Activated CD4-positive, alpha-beta memory T cell treated with anti-CD3 and anti-CD28 coated beads, Interleukin-2, amount 10 ng/mL, durations not matched to agents 7 days and 5 days (primary cell): ENCODE measurements at regions of chr9 and their contacts with region 1.

Region 1: DNA sequence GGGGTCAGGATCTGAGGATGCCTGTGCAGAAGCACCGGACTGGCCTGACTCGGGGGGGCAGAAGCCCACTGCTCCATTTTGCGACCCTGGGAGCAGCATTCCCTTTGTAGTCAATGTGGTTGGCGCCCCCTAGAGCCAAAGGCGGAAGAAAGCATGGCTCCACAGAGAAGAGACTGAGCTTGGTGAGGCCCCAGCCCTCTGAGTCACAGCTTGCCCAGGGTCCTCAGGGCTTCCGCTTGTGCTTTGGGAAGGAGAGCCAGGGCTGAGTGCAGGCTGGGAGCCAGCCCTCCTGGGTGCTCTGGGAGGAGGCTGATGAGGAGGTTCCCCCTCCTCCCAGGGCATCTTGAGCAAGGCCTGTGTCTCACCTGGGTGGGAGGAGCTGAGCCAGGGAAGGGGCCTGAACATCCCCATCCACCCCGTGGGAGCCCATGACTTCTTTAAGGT is 5.5 kb upstream of the AQP3 start:
- DNase-seq: peak; percentile 64
- H3K4me3 Mint-ChIP-seq: peak overlapping the region; percentile 2
- H3K27ac Mint-ChIP-seq: peak overlapping the region; percentile 82
- H3K4me1 Mint-ChIP-seq: peaks cover 63% of the 10 kb centered on the region
- H3K27me3 Mint-ChIP-seq: no peaks in the 10 kb centered on the region

Region 2: DNA sequence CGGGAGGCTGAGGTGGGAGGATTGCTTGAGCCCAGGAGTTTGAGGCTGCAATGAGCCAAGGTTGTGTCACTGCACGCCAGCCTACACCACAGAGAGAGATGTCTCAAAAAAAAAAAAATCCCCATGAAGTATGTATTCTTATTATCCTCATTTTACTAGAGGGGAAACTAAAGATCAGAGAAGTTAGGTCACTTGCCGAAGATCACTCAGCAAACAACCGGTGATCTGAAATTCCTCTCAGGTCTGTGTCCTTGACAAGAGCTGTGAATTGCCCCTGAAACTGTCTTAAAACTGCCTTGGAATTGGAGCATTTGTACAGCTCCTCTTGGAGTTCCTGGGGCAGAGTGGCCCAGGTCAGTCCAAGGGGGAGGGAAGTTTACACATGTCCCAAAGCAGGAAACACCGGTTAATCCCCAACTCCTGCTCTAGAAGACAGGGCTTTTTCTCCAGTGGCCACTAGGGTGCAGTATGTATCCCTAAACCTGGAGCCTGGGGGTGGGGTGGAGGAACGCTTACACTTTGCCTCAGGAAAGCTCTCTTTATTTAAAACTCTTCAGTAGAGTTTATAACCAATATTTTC is 78.1 kb before region 1 on chr9:
- CTCF ChIA-PET with region 1: interaction called, 35 read pairs
- POLR2A ChIA-PET with region 1: interaction called, 8 read pairs
- DNase-seq: peak; percentile 70
- H3K4me3 Mint-ChIP-seq: no peak overlapping the region
- H3K27ac Mint-ChIP-seq: peak overlapping the region; percentile 33
- H3K4me1 Mint-ChIP-seq: peaks cover 14% of the 10 kb centered on the region
- H3K27me3 Mint-ChIP-seq: no peaks in the 10 kb centered on the region

Region 3: GRCh38 chr9:33404788-33405362 is 48.0 kb before region 1 on chr9:
- CTCF ChIA-PET with region 1: interaction called, 278 read pairs
- POLR2A ChIA-PET with region 1: interaction called, 3 read pairs
- DNase-seq: no peak
- H3K4me3 Mint-ChIP-seq: no peak overlapping the region
- H3K27ac Mint-ChIP-seq: no peak overlapping the region
- H3K4me1 Mint-ChIP-seq: peaks cover 10% of the 10 kb centered on the region
- H3K27me3 Mint-ChIP-seq: no peaks in the 10 kb centered on the region

Region 4: GRCh38 chr9:33436440-33436839 is 16.4 kb before region 1 on chr9:
- CTCF ChIA-PET with region 1: interaction called, 26 read pairs
- POLR2A ChIA-PET with region 1: interaction called, 11 read pairs
- DNase-seq: no peak
- H3K4me3 Mint-ChIP-seq: no peak overlapping the region
- H3K27ac Mint-ChIP-seq: no peak overlapping the region
- H3K4me1 Mint-ChIP-seq: peaks cover 55% of the 10 kb centered on the region
- H3K27me3 Mint-ChIP-seq: no peaks in the 10 kb centered on the region

Region 5: DNA sequence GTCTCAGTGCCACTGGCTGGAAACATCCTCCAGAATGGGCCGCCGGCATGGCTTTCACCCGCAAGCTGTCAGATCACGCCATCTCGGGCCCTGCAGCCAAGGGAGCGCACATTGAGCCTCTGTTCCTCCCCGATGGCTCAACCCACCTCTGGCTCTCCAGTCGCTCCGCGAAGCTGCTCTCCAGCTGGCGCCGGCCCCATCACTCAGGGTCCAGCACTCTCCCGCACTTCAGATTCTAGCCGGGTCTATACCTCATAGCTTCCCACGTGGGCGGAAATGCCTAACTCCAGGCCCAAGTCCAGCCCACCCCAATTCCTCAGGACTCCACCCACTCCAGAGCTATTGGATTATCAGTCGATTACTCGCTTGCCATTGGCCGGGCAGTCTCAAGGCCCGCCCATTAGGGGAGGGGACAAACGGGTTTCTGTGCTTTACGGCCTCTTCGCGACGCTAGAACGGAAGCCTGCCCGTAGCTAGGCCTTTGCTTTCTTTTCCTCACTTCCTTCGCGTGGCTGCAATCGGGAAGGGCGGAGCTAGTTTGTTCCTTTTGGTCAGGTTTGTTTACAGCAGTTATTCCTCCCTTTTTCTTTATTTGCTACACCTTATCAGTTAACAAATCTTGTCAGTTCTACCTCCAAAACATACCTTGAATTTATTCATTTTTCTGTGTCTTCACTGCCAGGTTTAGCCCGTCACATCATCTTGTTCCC is 20.9 kb after region 1 on chr9 and contains the start of gene NOL6:
- CTCF ChIA-PET with region 1: interaction called, 189 read pairs
- POLR2A ChIA-PET with region 1: interaction called, 40 read pairs
- DNase-seq: peak; percentile 98
- H3K4me3 Mint-ChIP-seq: peak within 1 kb of the TSS; percentile 92
- H3K27ac Mint-ChIP-seq: peak within 1 kb of the TSS; percentile 85
- H3K4me1 Mint-ChIP-seq: peaks cover 30% of the 10 kb centered on the region
- H3K27me3 Mint-ChIP-seq: no peaks in the 10 kb centered on the region
- total RNA-seq, gene NOL6: 21.6 to 22.4 TPM